IMR-90 (cell line): ENCODE measurements at regions of chr9 and their contacts with region 1.

Region 1: DNA sequence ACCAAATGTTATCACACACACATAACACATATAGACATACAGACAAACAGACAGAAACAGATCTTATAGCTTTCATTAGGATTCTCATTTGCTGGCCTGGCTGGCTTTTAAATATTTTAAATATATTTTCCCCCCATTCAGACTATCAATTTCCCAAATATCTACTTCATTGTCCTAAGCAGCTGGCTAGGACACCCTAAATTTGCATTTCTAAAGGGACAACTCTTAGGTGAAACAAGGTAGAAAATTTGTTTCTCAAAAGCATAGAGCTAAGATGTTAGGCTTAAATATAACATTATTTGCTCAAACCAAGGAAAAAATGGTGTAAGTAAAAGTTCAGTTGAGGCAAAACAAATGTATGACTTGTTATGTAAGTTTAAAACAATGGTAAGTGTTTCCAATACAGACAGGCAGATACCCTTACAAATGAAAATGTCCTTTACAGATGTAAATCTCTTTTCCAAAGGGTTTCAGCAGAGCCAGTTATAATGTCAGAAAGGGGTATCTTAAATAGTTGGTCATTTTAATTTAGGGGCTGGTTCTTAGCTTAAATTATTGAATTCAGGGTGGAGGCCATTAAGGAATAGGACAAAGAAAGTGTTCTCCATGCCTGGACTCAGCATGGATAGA is 522.8 kb downstream of the DMRTA1 start:
- DNase-seq: no peak
- ATAC-seq: no peak
- H3K4me3 ChIP-seq: no peak overlapping the region
- H3K27ac ChIP-seq: no peak overlapping the region
- H3K4me1 ChIP-seq: no peaks in the 10 kb centered on the region
- H3K27me3 ChIP-seq: no peaks in the 10 kb centered on the region
- CTCF ChIP-seq: no peak
- POLR2A ChIP-seq: no peak
- RAD21 ChIP-seq: no peak

Region 2: GRCh38 chr9:22773501-22774220 is 195.8 kb before region 1 on chr9:
- CTCF ChIA-PET with region 1: no interaction called
- POLR2A ChIA-PET with region 1: no interaction called
- dilution Hi-C with region 1: no loop called
- in situ Hi-C with region 1: no loop called
- intact Hi-C with region 1: no loop called
- DNase-seq: no peak
- ATAC-seq: no peak
- H3K4me3 ChIP-seq: no peak overlapping the region
- H3K27ac ChIP-seq: no peak overlapping the region
- H3K4me1 ChIP-seq: no peaks in the 10 kb centered on the region
- H3K27me3 ChIP-seq: no peaks in the 10 kb centered on the region
- CTCF ChIP-seq: no peak
- POLR2A ChIP-seq: no peak
- RAD21 ChIP-seq: no peak

Region 3: GRCh38 chr9:22913518-22913917 is 55.9 kb before region 1 on chr9:
- CTCF ChIA-PET with region 1: no interaction called
- POLR2A ChIA-PET with region 1: no interaction called
- dilution Hi-C with region 1: no loop called
- in situ Hi-C with region 1: loop called (anchors 10 kb)
- intact Hi-C with region 1: no loop called
- DNase-seq: no peak
- ATAC-seq: no peak
- H3K4me3 ChIP-seq: no peak overlapping the region
- H3K27ac ChIP-seq: no peak overlapping the region
- H3K4me1 ChIP-seq: no peaks in the 10 kb centered on the region
- H3K27me3 ChIP-seq: no peaks in the 10 kb centered on the region
- CTCF ChIP-seq: no peak
- POLR2A ChIP-seq: no peak
- RAD21 ChIP-seq: no peak